OCI-LY7 (cell line): ENCODE measurements at regions of chr10 and their contacts with region 1.

Region 1: GRCh38 chr10:74151056-74151878 is at the start of gene ADK:
- DNase-seq: peak; percentile 98
- H3K4me3 ChIP-seq: peak within 1 kb of the TSS; percentile 96
- H3K27ac ChIP-seq: peak within 1 kb of the TSS; percentile 75
- H3K4me1 ChIP-seq: peaks cover 27% of the 10 kb centered on the region
- CTCF ChIP-seq: peak; percentile 61
- total RNA-seq, gene ADK: 20.2 and 26.4 TPM in 2 replicates

Region 2: DNA sequence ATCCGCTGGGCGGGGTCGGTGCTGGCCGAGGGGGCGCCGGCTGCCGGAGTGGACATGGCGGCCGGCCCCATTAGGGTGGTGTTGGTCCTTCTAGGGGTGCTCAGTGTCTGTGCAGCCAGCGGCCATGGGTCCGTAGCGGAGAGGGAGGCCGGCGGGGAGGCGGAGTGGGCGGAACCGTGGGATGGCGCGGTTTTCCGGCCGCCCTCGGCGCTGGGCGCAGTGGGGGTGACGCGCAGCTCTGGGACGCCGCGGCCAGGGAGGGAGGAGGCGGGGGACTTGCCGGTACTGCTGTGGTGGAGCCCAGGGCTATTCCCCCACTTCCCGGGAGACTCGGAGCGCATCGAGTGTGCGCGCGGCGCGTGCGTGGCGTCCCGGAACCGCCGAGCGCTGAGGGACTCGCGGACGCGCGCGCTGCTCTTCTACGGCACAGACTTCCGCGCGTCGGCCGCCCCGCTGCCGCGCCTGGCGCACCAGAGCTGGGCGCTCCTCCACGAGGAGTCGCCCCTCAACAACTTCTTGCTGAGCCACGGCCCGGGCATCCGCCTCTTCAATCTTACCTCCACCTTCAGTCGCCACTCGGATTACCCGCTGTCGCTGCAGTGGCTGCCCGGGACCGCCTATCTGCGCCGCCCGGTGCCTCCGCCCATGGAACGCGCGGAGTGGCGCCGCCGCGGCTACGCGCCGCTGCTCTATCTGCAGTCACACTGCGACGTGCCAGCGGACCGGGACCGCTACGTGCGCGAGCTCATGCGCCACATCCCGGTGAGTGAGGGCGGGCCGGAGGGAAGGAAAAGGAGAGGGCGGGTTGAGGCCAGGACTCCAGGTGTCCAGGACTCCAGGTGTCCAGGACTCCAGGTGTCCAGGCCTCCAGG is 378.8 kb before region 1 on chr10:
- CTCF ChIA-PET with region 1: no interaction called
- POLR2A ChIA-PET with region 1: no interaction called
- intact Hi-C with region 1: no loop called
- DNase-seq: peak; percentile 82
- H3K4me3 ChIP-seq: peak overlapping the region; percentile 82
- H3K27ac ChIP-seq: peak overlapping the region; percentile 77
- H3K4me1 ChIP-seq: peaks cover 59% of the 10 kb centered on the region
- CTCF ChIP-seq: peak; percentile 45; the same call in 1 of the 2 replicates

Region 3: GRCh38 chr10:74011770-74012169 is 139.5 kb before region 1 on chr10:
- CTCF ChIA-PET with region 1: no interaction called
- POLR2A ChIA-PET with region 1: no interaction called
- intact Hi-C with region 1: loop called (anchors 5 kb)
- DNase-seq: no peak
- H3K4me3 ChIP-seq: peak overlapping the region; percentile 50
- H3K27ac ChIP-seq: peak overlapping the region; percentile 95
- H3K4me1 ChIP-seq: peaks cover 83% of the 10 kb centered on the region
- CTCF ChIP-seq: no peak

Region 4: GRCh38 chr10:74071157-74071556 is 80.1 kb before region 1 on chr10:
- CTCF ChIA-PET with region 1: no interaction called
- POLR2A ChIA-PET with region 1: no interaction called
- intact Hi-C with region 1: no loop called
- DNase-seq: no peak
- H3K4me3 ChIP-seq: no peak overlapping the region
- H3K27ac ChIP-seq: no peak overlapping the region
- H3K4me1 ChIP-seq: peaks cover 9% of the 10 kb centered on the region
- CTCF ChIP-seq: no peak

Region 5: GRCh38 chr10:74165530-74165901 is 14.2 kb after region 1 on chr10:
- CTCF ChIA-PET with region 1: interaction called, 3 read pairs
- POLR2A ChIA-PET with region 1: interaction called, 13 read pairs
- intact Hi-C with region 1: loop called (anchors 1 kb)
- DNase-seq: no peak
- H3K4me3 ChIP-seq: no peak overlapping the region
- H3K27ac ChIP-seq: no peak overlapping the region
- H3K4me1 ChIP-seq: peaks cover 50% of the 10 kb centered on the region
- CTCF ChIP-seq: no peak

Region 6: GRCh38 chr10:74176380-74177139 is 25.3 kb after region 1 on chr10:
- CTCF ChIA-PET with region 1: no interaction called
- POLR2A ChIA-PET with region 1: interaction called, 11 read pairs
- intact Hi-C with region 1: loop called (anchors 1 kb)
- DNase-seq: peak; percentile 91
- H3K4me3 ChIP-seq: peak overlapping the region; percentile 74
- H3K27ac ChIP-seq: peak overlapping the region; percentile 52
- H3K4me1 ChIP-seq: peaks cover 20% of the 10 kb centered on the region
- CTCF ChIP-seq: no peak

Region 7: DNA sequence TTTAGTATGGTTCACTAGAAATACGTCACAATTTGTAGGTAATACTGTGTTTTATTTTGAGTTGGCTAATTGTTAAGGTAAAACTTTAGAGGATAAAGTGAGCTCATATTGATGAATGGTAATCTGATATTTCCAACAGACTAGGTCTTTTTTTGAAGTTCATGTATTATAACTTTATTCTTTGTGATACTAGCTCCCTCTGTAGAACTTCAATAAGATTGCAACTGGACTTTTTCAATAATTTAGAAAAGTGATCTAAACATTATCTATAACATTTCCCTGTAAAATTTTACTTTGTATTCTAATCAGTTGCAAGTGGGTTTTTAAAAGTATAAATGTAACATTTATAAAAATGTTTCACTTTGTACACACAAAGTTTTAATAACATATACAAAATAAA is 83.3 kb after region 1 on chr10:
- CTCF ChIA-PET with region 1: no interaction called
- POLR2A ChIA-PET with region 1: interaction called, 8 read pairs
- intact Hi-C with region 1: loop called (anchors 5 kb)
- DNase-seq: peak; percentile 20
- H3K4me3 ChIP-seq: no peak overlapping the region
- H3K27ac ChIP-seq: no peak overlapping the region
- H3K4me1 ChIP-seq: no peaks in the 10 kb centered on the region
- CTCF ChIP-seq: peak; percentile 81